ENCODE measurements at regions of chr11 and their contacts with region 1.

Region 1: GRCh38 chr11:65403607-65404121 is 17.2 kb downstream of the FRMD8 start:
- DNase-seq: no peak
- ATAC-seq: peak; percentile 72
- H3K4me3 ChIP-seq: no peak overlapping the region
- H3K27ac ChIP-seq: peak overlapping the region; percentile 91
- H3K4me1 ChIP-seq: peaks cover 20% of the 10 kb centered on the region
- H3K27me3 ChIP-seq: no peaks in the 10 kb centered on the region
- CTCF ChIP-seq: no peak
- EP300 ChIP-seq: no peak
- POLR2A ChIP-seq: no peak
- RAD21 ChIP-seq: no peak

Region 2: DNA sequence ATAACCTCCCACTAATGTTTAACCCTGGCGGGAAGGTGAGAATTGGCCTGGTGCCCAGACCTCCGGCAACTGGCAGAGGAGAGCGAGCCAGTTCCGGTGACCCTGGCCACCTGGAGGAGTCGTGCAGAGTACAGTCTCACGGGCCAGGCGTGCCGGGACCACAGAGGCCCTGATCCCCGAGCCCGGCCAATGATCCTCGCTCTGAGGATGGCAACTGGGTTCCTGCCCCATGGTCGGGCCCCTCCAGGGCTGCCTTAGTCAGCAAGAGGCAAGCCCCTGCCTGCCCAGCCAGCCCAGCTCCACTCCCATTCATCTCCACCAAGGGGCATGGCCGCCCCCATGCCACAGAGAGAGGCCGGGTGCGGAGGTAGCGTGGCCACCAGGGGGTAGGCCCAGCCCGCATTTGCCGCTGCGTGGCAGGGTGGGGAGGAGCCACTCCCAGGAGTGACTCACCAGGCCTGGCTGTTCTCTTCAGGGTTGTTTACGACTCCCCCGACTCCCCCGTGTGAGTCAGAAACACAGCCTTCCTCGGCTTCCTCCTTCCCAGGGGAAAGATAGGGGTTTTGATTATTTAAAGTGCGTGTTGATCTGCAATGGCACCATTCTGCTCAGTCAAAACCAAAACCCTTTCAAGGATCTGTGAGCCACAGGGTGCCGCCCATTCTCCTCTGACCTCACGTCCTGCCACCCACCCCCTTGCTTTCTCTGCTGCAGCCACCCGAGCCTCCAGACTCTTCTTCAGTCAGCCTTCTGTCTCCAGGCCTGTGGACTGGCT is 21.4 kb before region 1 on chr11 and contains the start of gene SLC25A45:
- CTCF ChIA-PET with region 1: interaction called, 13 read pairs
- POLR2A ChIA-PET with region 1: interaction called, 7 read pairs
- RAD21 ChIA-PET with region 1: interaction called, 5 read pairs
- SMC1A ChIA-PET with region 1: interaction called, 9 read pairs
- in situ Hi-C with region 1: no loop called
- intact Hi-C with region 1: no loop called
- DNase-seq: peak; percentile 84
- ATAC-seq: peak; percentile 86
- H3K4me3 ChIP-seq: peak within 1 kb of the TSS; percentile 90
- H3K27ac ChIP-seq: peak within 1 kb of the TSS; percentile 99
- H3K4me1 ChIP-seq: peaks cover 58% of the 10 kb centered on the region
- H3K27me3 ChIP-seq: no peaks in the 10 kb centered on the region
- CTCF ChIP-seq: peak; percentile 70 to 79 (median 71)
- EP300 ChIP-seq: peak in 1 of 2 experiments; percentile 24; a peak in 1 of 4 replicates
- POLR2A ChIP-seq: peak; percentile 78
- RAD21 ChIP-seq: peak; percentile 74
- polyA plus RNA-seq, gene SLC25A45: 4.1 to 9.7 TPM

Region 3: GRCh38 chr11:65388731-65389130 is 14.9 kb before region 1 on chr11:
- CTCF ChIA-PET with region 1: interaction called, 13 read pairs
- POLR2A ChIA-PET with region 1: interaction called, 10 read pairs
- RAD21 ChIA-PET with region 1: interaction called, 6 read pairs
- SMC1A ChIA-PET with region 1: interaction called, 9 read pairs
- in situ Hi-C with region 1: no loop called
- intact Hi-C with region 1: no loop called
- DNase-seq: peak; percentile 19
- ATAC-seq: peak; percentile 36
- H3K4me3 ChIP-seq: peak overlapping the region; percentile 49; the same call in 1 of the 2 replicates
- H3K27ac ChIP-seq: peak overlapping the region; percentile 5
- H3K4me1 ChIP-seq: peaks cover 51% of the 10 kb centered on the region
- H3K27me3 ChIP-seq: no peaks in the 10 kb centered on the region
- CTCF ChIP-seq: no peak
- EP300 ChIP-seq: no peak
- POLR2A ChIP-seq: no peak
- RAD21 ChIP-seq: no peak

Measured in GM12878 (cell line).